Activated T-helper 1 cell treated with anti-CD3 and anti-CD28 coated beads, Interleukin-12 subunit alpha, Interleukin-12 subunit beta, Interleukin-2, Interleukin-4 antibody, amounts not matched to agents 30 ng/mL and 10 ng/mL and 1 ng/mL, durations not matched to agents 14 hours and 24 hours and 36 hours (primary cell): ENCODE measurements at regions of chr18 and their contacts with region 1.

Region 1: GRCh38 chr18:48951448-48952286 is 902 bp upstream of the SMAD7 start:
- DNase-seq: peak; percentile 68
- H3K4me3 Mint-ChIP-seq: peak overlapping the region; percentile 98
- H3K27ac Mint-ChIP-seq: peak overlapping the region; percentile 96
- H3K4me1 Mint-ChIP-seq: peaks cover 45% of the 10 kb centered on the region
- H3K27me3 Mint-ChIP-seq: peaks cover 14% of the 10 kb centered on the region

Region 2: GRCh38 chr18:48629730-48630324 is 321.8 kb before region 1 on chr18:
- intact Hi-C with region 1: no loop called
- DNase-seq: no peak
- H3K4me3 Mint-ChIP-seq: no peak overlapping the region
- H3K27ac Mint-ChIP-seq: no peak overlapping the region
- H3K4me1 Mint-ChIP-seq: no peaks in the 10 kb centered on the region
- H3K27me3 Mint-ChIP-seq: peaks cover 5% of the 10 kb centered on the region

Region 3: GRCh38 chr18:48777026-48777743 is 174.5 kb before region 1 on chr18:
- intact Hi-C with region 1: loop called (anchors 1 kb)
- DNase-seq: peak; percentile 59
- H3K4me3 Mint-ChIP-seq: no peak overlapping the region
- H3K27ac Mint-ChIP-seq: no peak overlapping the region
- H3K4me1 Mint-ChIP-seq: peaks cover 14% of the 10 kb centered on the region
- H3K27me3 Mint-ChIP-seq: no peaks in the 10 kb centered on the region

Region 4: DNA sequence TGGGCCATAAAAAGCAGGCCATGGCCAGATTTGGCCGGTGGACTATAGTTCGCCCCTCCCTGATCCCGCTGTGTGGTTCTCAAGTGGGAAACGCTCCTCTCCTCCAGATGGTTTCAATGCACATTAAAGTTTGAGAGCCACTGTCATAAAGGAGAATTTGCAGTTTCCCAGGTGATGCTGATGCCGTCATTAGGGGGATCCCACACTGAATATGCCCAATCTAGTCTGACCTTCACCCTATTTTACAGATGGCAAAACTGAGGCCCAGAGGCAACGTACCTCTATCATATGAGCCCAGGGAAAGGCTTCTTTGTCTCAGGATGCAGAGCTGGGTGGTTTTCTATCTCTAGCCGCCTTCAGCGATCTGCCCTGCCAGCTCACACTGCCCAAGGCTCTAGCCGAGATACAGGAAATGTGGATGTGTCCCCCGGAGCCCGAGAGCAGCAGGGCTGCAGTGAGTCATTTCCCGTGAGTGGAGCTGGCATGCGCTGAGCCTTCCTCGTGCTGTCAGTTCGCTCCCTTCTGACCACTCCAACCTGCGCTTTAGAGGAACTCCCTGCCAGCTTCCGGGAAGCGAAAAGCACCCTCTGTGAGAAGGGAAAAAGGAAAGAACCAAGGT is 117.1 kb before region 1 on chr18:
- intact Hi-C with region 1: loop called (anchors 1 kb)
- DNase-seq: peak; percentile 68
- H3K4me3 Mint-ChIP-seq: peak overlapping the region; percentile 86
- H3K27ac Mint-ChIP-seq: peak overlapping the region; percentile 99
- H3K4me1 Mint-ChIP-seq: peaks cover 77% of the 10 kb centered on the region
- H3K27me3 Mint-ChIP-seq: peaks cover 2% of the 10 kb centered on the region

Region 5: DNA sequence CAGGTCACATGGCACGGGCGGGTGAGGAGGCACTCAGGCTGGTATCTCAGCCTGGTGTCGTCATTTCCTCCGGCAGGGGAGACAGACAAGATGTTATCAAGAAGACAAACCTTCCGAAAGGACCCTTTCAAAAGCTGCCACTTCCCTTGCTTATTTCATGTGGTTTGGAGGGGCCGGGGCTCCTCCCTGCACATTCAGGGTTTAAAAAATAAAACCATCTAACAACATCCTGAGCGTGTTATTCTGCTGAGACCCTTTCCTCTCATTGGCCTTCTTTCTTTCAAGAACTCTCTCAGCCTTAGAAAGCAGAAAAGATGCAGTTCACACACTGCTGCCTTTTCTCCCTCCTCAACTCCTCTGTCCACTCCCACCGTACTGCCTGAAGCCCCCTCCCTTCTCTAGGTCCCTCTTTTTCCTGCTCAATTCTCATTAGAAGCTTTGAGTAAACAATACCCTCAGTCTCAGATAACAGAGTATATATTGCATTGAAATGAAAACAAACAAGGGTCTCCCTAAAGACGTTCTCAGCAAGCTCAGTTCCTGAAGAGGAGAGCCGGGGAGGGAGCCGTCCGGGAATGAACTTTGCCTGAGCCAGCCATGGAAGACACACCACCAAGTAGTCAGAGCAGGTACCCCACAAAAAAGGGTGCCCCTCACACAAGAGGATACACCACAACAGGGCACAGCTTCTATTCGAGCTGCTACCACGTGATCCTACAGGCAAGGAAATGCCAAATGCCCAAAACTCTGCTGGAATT is 10.6 kb before region 1 on chr18:
- intact Hi-C with region 1: loop called (anchors 1 kb)
- DNase-seq: peak; percentile 73
- H3K4me3 Mint-ChIP-seq: peak overlapping the region; percentile 81
- H3K27ac Mint-ChIP-seq: peak overlapping the region; percentile 86
- H3K4me1 Mint-ChIP-seq: peaks cover 81% of the 10 kb centered on the region
- H3K27me3 Mint-ChIP-seq: peaks cover 2% of the 10 kb centered on the region

Region 6: GRCh38 chr18:49161627-49162026 is 210.0 kb after region 1 on chr18:
- intact Hi-C with region 1: loop called (anchors 5 kb)
- DNase-seq: peak; percentile 21
- H3K4me3 Mint-ChIP-seq: no peak overlapping the region
- H3K27ac Mint-ChIP-seq: peak overlapping the region; percentile 29
- H3K4me1 Mint-ChIP-seq: peaks cover 37% of the 10 kb centered on the region
- H3K27me3 Mint-ChIP-seq: no peaks in the 10 kb centered on the region

Region 7: GRCh38 chr18:49486953-49487710 is 535.5 kb after region 1 on chr18 and contains the start of gene C18orf32:
- intact Hi-C with region 1: loop called (anchors 2 kb)
- DNase-seq: peak; percentile 92
- H3K4me3 Mint-ChIP-seq: peak within 1 kb of the TSS; percentile 93
- H3K27ac Mint-ChIP-seq: peak within 1 kb of the TSS; percentile 98
- H3K4me1 Mint-ChIP-seq: peaks cover 53% of the 10 kb centered on the region
- H3K27me3 Mint-ChIP-seq: no peaks in the 10 kb centered on the region
- total RNA-seq, gene C18orf32: 28.7 and 31.2 TPM in 2 replicates